Activated T-helper 1 cell treated with anti-CD3 and anti-CD28 coated beads, Interleukin-12 subunit alpha, Interleukin-12 subunit beta, Interleukin-2, Interleukin-4 antibody, amounts not matched to agents 30 ng/mL and 10 ng/mL and 1 ng/mL, durations not matched to agents 14 hours and 24 hours and 36 hours (primary cell): ENCODE measurements at regions of chr7 and their contacts with region 1.

Region 1: GRCh38 chr7:151558575-151558974 is 38.9 kb upstream of the RHEB start:
- DNase-seq: no peak
- H3K4me3 Mint-ChIP-seq: no peak overlapping the region
- H3K27ac Mint-ChIP-seq: no peak overlapping the region
- H3K4me1 Mint-ChIP-seq: peaks cover 13% of the 10 kb centered on the region
- H3K27me3 Mint-ChIP-seq: no peaks in the 10 kb centered on the region

Region 2: DNA sequence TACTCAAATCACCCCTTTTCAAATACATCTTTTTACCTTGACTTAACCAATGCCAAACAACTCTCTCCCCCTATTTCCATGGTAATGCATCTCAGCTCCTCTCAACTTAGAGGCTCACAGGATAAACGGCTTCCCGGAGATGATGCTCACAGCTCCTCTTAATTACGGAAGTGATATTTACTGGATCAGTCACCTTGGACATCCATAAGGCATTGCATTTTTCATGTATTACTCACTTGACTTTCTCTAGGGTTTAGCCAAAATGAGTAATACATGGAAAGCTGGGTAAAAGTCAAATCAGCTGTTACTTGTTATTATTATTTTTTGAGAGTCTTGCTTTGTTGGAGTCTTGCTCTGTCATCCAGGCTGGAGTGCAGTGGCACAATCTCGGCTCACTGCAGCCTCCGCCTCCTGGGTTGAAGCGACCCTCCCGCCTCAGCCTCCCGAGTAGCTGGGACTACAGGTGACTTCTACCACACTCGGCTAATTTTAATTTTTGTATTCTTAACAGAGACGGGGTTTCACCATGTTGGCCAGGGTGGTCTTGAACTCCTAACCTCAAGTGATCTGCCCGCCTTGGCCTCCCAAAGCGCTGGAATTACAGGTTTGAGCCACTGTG is 34.4 kb after region 1 on chr7:
- intact Hi-C with region 1: no loop called
- DNase-seq: no peak
- H3K4me3 Mint-ChIP-seq: no peak overlapping the region
- H3K27ac Mint-ChIP-seq: no peak overlapping the region
- H3K4me1 Mint-ChIP-seq: no peaks in the 10 kb centered on the region
- H3K27me3 Mint-ChIP-seq: no peaks in the 10 kb centered on the region

Region 3: DNA sequence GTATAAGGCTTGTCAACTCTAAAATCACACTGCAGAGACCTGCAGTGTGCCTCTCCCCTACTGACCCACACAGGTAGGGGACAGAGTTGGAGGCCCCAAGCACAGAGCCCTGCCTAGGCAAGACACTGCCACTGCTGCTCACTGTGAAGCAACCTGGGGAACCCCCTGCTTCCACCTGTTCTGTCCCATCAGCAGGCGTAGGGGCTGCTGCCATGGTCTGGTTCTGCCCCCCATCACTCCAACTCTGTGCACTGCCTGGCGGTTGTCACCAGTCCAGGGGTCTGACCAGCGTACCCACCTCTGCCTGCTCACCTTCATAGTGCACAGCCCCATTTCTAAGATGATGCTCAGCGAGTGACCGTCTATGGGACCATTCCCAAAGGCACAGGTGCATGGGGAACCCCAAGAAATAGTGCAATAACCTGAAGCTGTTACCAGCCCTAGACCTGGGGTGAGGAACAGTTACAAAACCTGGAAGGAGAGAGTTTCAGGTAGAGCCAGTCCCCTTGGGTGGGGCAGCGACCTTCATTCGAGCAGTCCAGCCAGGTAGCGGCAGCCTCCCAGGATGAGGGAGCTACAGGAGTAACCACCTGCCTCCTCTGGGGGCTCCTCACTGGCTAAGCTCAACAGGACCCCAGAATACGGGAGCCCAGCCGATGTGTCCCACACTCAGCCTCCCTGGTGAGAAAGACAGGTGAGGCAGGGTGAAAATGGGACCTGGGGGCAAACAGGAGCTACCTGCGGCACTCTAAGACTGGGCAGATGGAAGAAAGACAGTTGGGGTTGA is 54.0 kb after region 1 on chr7:
- intact Hi-C with region 1: loop called (anchors 5 kb)
- DNase-seq: no peak
- H3K4me3 Mint-ChIP-seq: no peak overlapping the region
- H3K27ac Mint-ChIP-seq: no peak overlapping the region
- H3K4me1 Mint-ChIP-seq: peaks cover 2% of the 10 kb centered on the region
- H3K27me3 Mint-ChIP-seq: no peaks in the 10 kb centered on the region

Region 4: DNA sequence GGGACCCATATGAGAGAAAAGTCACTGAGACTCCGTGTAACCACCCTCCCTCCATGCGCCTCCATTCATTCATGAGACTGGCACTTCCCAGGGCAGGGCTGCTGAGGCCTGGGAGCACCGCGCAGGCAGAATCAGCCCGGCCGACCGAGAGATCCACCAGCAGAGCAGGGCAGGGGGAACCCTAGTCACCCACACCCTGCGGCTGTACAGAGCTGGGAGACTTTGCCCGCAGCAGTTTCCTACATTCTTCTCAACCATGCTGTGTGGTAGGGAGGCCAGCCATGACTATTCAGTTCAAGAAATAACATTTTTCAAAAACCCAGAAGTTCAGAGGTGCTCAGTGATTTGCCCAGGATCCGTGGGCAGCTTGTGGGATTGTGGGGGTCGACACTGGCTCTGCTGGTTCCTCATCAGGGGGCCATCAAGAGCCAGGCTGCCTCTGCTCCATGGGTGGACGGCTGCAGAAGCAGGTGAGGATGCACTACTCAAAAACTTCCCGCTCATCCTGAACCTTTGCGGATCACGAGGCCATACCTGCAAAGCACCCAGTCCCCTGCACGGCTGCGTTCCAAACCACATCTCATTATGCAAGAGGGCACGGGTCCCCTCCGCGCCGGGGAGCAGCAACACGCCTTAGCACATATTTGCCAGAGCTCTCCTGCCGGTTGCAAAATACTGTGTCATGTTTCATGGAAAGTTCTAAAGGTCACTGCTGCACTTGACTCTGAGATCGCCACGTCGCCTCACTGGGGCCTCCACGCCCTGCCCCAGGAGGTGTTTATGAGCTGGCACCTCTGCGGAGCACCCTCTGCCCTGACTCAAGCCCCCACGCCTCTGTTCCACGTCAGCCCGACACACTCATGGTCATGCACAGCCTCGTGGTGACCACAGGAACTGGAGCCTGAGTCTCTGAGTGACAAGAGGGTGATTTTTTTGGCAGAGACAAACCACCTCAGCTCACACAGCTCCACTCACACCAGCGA is 186.4 kb after region 1 on chr7:
- intact Hi-C with region 1: no loop called
- DNase-seq: no peak
- H3K4me3 Mint-ChIP-seq: no peak overlapping the region
- H3K27ac Mint-ChIP-seq: no peak overlapping the region
- H3K4me1 Mint-ChIP-seq: peaks cover 9% of the 10 kb centered on the region
- H3K27me3 Mint-ChIP-seq: peaks cover 5% of the 10 kb centered on the region